Mammary epithelial cell (primary cell): ENCODE measurements at regions of chr2 and their contacts with region 1.

Region 1: GRCh38 chr2:238513346-238513745 is 86.6 kb downstream of the ASB1 start:
- DNase-seq: peak; percentile 44
- H3K4me3 ChIP-seq: no peak overlapping the region
- H3K27ac ChIP-seq: no peak overlapping the region
- H3K4me1 ChIP-seq: peaks cover 5% of the 10 kb centered on the region
- H3K27me3 ChIP-seq: no peaks in the 10 kb centered on the region
- CTCF ChIP-seq: peak; percentile 62 to 78

Region 2: GRCh38 chr2:238239872-238240751 is 273.2 kb before region 1 on chr2 and contains the start of gene HES6:
- CTCF ChIA-PET with region 1: no interaction called
- dilution Hi-C with region 1: no loop called
- in situ Hi-C with region 1: no loop called
- intact Hi-C with region 1: no loop called
- DNase-seq: peak; percentile 84
- H3K4me3 ChIP-seq: peak within 1 kb of the TSS in 2 of 3 experiments; percentile 59 to 73
- H3K27ac ChIP-seq: no peak within 1 kb of the TSS
- H3K4me1 ChIP-seq: peaks cover 9% of the 10 kb centered on the region
- H3K27me3 ChIP-seq: peaks cover 2% of the 10 kb centered on the region
- CTCF ChIP-seq: no peak
- total RNA-seq, gene HES6: 1.2 to 5.0 TPM

Region 3: DNA sequence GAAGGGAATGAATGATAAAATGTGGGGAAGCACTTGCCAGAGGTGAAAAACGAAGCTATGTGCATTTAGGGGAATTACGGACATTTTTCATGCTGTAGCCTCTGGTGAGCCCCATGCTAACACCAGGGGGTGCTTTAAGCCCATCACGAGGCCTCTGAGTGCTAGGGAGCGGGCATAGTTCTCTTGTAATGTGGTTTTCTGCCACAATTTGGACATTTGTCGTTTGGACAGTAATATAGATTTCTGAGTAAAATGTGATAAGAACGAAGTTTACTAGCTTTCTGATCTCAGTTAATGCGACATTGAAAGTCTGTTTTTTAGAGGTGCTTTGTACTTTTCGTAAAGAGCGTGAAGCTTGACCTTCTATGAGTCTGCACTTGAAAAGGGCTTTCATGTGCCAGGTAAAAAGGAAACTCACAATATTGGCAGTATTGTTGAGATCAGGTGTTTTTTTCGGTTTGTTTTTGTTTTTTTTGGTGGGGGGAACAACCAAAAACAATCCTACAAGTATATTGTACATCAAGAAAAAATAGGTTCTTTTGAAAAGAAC is 142.4 kb before region 1 on chr2:
- CTCF ChIA-PET with region 1: no interaction called
- dilution Hi-C with region 1: no loop called
- in situ Hi-C with region 1: no loop called
- intact Hi-C with region 1: loop called (anchors 1 kb)
- DNase-seq: peak; percentile 51
- H3K4me3 ChIP-seq: no peak overlapping the region
- H3K27ac ChIP-seq: no peak overlapping the region
- H3K4me1 ChIP-seq: no peaks in the 10 kb centered on the region
- H3K27me3 ChIP-seq: no peaks in the 10 kb centered on the region
- CTCF ChIP-seq: peak; percentile 79 to 82

Region 4: DNA sequence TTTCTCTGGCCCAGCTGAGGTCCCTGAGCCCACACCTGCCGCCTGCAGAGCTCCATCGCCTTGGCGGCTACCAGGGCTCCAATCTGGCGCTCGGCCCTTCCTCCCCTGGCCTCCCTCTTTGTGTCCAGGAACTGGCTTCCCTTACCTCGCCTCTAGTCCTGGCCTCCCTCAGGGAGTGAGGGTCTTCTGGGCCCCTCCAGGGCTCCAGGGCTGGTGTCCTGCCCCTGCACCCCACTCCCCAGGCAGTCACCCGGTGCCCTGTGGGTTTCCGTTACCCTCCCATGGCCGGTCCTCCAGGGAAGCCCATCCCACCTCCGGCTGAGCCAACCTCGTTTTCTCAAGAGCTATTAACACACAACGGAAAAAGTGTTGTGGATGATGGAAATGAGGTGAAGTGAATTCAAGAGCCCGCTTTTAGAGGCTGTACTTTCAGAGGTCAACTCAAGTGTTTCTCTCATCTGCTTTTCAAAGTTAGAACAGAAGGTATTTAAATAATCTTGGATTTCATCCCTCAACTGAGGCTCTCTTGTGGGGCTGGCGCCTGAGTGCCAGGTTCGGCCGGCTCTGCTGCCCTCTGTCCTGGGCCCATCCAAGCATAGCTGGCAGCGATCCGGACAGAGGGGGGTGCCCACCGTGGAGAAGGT is 45.2 kb after region 1 on chr2:
- CTCF ChIA-PET with region 1: no interaction called
- dilution Hi-C with region 1: loop called (anchors 5 kb)
- in situ Hi-C with region 1: no loop called
- intact Hi-C with region 1: no loop called
- DNase-seq: no peak
- H3K4me3 ChIP-seq: no peak overlapping the region
- H3K27ac ChIP-seq: no peak overlapping the region
- H3K4me1 ChIP-seq: no peaks in the 10 kb centered on the region
- H3K27me3 ChIP-seq: no peaks in the 10 kb centered on the region
- CTCF ChIP-seq: no peak

Region 5: GRCh38 chr2:238720232-238720672 is 206.9 kb after region 1 on chr2:
- CTCF ChIA-PET with region 1: interaction called, 3 read pairs
- dilution Hi-C with region 1: no loop called
- in situ Hi-C with region 1: no loop called
- intact Hi-C with region 1: loop called (anchors 1 kb)
- DNase-seq: peak; percentile 100
- H3K4me3 ChIP-seq: no peak overlapping the region
- H3K27ac ChIP-seq: peak overlapping the region; percentile 82
- H3K4me1 ChIP-seq: peaks cover 17% of the 10 kb centered on the region
- H3K27me3 ChIP-seq: no peaks in the 10 kb centered on the region
- CTCF ChIP-seq: peak; percentile 94 to 95

Region 6: GRCh38 chr2:239002954-239003588 is 489.7 kb after region 1 on chr2:
- CTCF ChIA-PET with region 1: no interaction called
- dilution Hi-C with region 1: no loop called
- in situ Hi-C with region 1: no loop called
- intact Hi-C with region 1: loop called (anchors 10 kb)
- DNase-seq: peak; percentile 37
- H3K4me3 ChIP-seq: peak overlapping the region in 2 of 3 experiments; percentile 14 to 25
- H3K27ac ChIP-seq: no peak overlapping the region
- H3K4me1 ChIP-seq: peaks cover 23% of the 10 kb centered on the region
- H3K27me3 ChIP-seq: no peaks in the 10 kb centered on the region
- CTCF ChIP-seq: peak; percentile 6 to 15